PC-9 (cell line): ENCODE measurements at regions of chr19 and their contacts with region 1.

Region 1: GRCh38 chr19:42352301-42353259 is 27.1 kb downstream of the MEGF8 start:
- DNase-seq: no peak
- H3K4me3 ChIP-seq: no peak overlapping the region
- H3K27ac ChIP-seq: no peak overlapping the region
- H3K4me1 ChIP-seq: no peaks in the 10 kb centered on the region
- H3K27me3 ChIP-seq: no peaks in the 10 kb centered on the region
- CTCF ChIP-seq: no peak

Region 2: DNA sequence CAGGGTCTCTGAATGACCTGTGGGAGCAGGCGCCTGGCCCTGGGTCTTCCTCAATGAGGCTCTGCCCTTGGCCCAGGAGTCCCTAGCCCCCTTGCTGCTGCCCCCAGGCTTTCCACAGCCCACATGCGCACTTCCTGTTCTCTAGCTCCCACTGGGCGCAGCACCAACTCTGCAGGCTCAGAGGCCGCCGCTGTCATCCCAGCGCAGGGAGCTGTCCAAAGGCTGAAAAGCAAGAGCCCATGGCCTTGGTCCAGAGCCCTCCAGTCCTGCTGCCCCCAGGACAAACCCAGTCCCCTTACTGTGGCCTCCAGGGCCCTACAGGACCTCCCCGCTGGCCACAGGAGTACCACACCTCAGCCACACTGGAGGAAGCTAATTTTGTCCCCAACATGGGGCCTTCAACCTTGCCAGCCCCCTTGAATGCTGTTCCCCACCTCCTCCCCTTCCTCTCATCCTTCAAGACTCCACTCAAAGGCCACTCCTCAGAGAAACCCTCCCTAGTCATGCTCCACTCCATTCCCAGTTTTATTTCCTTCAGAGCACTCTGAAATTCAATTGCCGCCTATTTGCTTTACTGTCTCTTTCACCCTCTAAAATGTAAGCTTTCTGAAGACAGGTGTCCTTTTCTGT is 212.3 kb before region 1 on chr19:
- CTCF ChIA-PET with region 1: interaction called, 10 read pairs
- POLR2A ChIA-PET with region 1: no interaction called
- intact Hi-C with region 1: no loop called
- DNase-seq: peak in 1 of 2 experiments; percentile 56
- H3K4me3 ChIP-seq: no peak overlapping the region
- H3K27ac ChIP-seq: no peak overlapping the region
- H3K4me1 ChIP-seq: no peaks in the 10 kb centered on the region
- H3K27me3 ChIP-seq: peaks cover 13% of the 10 kb centered on the region
- CTCF ChIP-seq: no peak

Region 3: DNA sequence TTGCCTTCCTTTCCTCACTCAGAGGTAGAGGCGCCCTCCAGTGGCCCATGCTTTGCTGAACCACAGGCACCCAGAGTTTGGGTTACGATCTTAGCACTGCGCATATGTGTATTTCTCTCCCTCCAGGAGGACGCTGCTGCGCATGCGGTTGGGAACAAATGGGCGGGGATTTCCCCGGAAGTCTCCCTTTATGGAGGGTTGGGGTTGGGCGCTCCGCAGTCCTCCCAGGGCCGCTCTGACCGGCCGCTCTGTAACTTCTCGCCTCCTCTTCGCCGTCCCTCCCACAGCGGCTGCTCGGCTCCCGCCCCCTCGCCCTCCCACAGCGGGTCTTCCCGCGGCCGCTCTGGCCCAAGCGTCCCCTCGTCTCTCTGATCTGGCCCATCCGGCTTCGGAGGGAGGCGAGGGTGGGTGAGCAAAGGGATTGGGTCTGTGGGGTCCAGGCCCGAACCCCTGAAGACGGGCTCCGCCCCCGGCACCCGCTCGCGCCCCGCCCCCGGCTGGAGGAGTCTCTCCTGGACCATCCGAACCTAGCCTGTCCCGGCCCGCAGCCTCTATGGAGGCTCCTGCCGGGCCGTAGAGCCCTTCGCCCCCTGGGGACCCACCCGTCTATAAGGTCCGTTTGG is 27.2 kb before region 1 on chr19 and contains the start of gene MEGF8:
- CTCF ChIA-PET with region 1: no interaction called
- POLR2A ChIA-PET with region 1: no interaction called
- intact Hi-C with region 1: no loop called
- DNase-seq: peak; percentile 96 to 98
- H3K4me3 ChIP-seq: peak within 1 kb of the TSS; percentile 94
- H3K27ac ChIP-seq: no peak within 1 kb of the TSS
- H3K4me1 ChIP-seq: peaks cover 14% of the 10 kb centered on the region
- H3K27me3 ChIP-seq: no peaks in the 10 kb centered on the region
- CTCF ChIP-seq: no peak; the same call in none of the 2 replicates
- total RNA-seq, gene MEGF8: 40.6 and 49.0 TPM in 2 replicates